ENCODE measurements at regions of chr1 and their contacts with region 1.

Region 1: DNA sequence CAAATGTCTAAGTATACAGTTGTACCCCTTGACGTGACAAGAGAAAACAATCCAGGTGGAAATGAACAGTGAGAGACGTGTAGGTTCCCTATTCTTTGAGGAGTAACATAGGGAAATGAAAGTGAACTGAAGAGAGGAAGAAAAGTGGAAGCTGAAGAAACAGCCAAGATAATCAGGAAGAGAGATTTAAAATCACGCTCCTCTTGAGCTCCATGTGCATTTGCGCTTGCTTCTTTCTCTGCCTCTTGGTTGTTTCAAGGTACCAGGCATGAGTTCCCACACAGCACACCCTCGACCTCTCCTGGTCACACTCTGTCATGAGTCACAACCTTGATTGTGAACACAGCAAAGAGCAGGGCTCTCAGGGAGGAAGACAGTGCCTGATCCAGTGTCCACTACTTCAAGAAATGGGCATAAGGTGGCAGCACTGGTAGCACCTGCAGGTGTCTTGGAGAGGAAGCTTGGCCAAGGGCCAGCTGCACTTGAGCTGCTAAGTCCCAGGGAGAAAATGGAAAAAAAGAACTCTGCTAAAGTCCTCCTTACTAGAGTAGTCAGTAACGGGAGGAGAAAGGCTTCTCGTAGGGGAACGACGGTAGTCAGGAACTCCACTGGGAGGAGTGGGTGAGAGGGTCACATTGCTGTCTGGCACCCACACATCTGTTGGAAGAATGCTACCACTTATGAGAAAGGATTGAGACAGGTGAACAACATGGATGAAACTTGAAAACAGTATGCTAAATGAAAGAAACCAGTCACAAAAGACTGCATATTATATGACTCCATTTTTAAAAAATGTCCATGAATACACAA is 18.3 kb upstream of the ARID1A start:
- DNase-seq: peak; percentile 81 to 91
- ATAC-seq: peak; percentile 100
- H3K4me3 ChIP-seq: peak overlapping the region in 3 of 4 donors; percentile 2 to 38 (median 10)
- H3K27ac ChIP-seq: peak overlapping the region in 3 of 4 donors; percentile 19 to 51 (median 45)
- H3K4me1 ChIP-seq: peaks cover 4 to 9% of the 10 kb centered on the region in 2 donors
- H3K27me3 ChIP-seq: no peaks in the 10 kb centered on the region
- CTCF ChIP-seq: peak; percentile 74 to 88 (median 79)
- POLR2A ChIP-seq: no peak

Region 2: GRCh38 chr1:26799479-26800142 is 122.1 kb after region 1 on chr1:
- in situ Hi-C with region 1: loop called in 1 of 4 experiments (anchors 10 kb)
- intact Hi-C with region 1: no loop called
- DNase-seq: peak; percentile 51 to 75
- ATAC-seq: peak; percentile 82 to 85
- H3K4me3 ChIP-seq: peak overlapping the region; percentile 5 to 24 (median 14)
- H3K27ac ChIP-seq: peak overlapping the region; percentile 77 to 89 (median 80)
- H3K4me1 ChIP-seq: peaks cover 30 to 39% of the 10 kb centered on the region in 2 donors
- H3K27me3 ChIP-seq: no peaks in the 10 kb centered on the region
- CTCF ChIP-seq: no peak
- POLR2A ChIP-seq: no peak

Measured in gastrocnemius medialis (tissue), 4 donors.